ENCODE measurements at regions of chr5 and their contacts with region 1.

Region 1: DNA sequence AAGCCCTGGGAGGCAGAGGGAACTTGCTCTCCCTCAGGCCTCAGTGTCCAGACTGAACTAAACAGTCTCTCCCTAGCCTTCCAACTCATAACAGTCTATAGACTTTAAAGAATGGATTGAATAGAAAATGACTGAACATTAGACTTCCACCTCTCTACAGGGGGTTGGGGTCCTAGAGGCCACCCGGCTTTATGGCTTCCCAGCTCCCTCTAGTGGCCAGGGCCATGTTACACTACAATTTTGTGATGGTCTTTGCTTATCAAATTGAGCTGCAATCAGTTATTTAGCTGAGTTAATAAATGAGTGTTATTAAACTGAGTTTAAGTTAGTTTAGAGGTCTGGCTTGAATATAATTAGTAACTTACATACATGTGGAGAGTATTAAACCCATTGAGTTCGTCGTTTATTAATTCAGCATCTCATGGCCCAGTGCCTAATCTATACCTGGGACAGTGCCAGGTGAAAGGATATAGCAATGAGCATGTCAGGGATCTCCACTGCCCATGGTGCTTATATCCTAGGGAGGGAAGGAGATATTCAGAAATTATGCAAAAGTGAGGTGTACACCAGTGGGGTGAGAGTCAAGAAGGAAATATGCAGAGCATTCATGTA is 105.2 kb downstream of the SH3TC2 start:
- DNase-seq: peak; percentile 71
- H3K4me3 Mint-ChIP-seq: no peak overlapping the region
- H3K27ac Mint-ChIP-seq: no peak overlapping the region
- H3K4me1 Mint-ChIP-seq: peaks cover 24% of the 10 kb centered on the region
- H3K27me3 Mint-ChIP-seq: no peaks in the 10 kb centered on the region
- CTCF ChIP-seq: peak; percentile 99

Region 2: GRCh38 chr5:148858106-148858505 is 99.6 kb before region 1 on chr5:
- CTCF ChIA-PET with region 1: interaction called, 10 read pairs
- POLR2A ChIA-PET with region 1: no interaction called
- intact Hi-C with region 1: no loop called
- DNase-seq: no peak
- H3K4me3 Mint-ChIP-seq: no peak overlapping the region
- H3K27ac Mint-ChIP-seq: no peak overlapping the region
- H3K4me1 Mint-ChIP-seq: peaks cover 14% of the 10 kb centered on the region
- H3K27me3 Mint-ChIP-seq: no peaks in the 10 kb centered on the region
- CTCF ChIP-seq: no peak

Region 3: GRCh38 chr5:148928141-148928540 is 29.6 kb before region 1 on chr5:
- CTCF ChIA-PET with region 1: interaction called, 23 read pairs
- POLR2A ChIA-PET with region 1: no interaction called
- intact Hi-C with region 1: no loop called
- DNase-seq: no peak
- H3K4me3 Mint-ChIP-seq: no peak overlapping the region
- H3K27ac Mint-ChIP-seq: no peak overlapping the region
- H3K4me1 Mint-ChIP-seq: peaks cover 11% of the 10 kb centered on the region
- H3K27me3 Mint-ChIP-seq: no peaks in the 10 kb centered on the region
- CTCF ChIP-seq: no peak

Region 4: DNA sequence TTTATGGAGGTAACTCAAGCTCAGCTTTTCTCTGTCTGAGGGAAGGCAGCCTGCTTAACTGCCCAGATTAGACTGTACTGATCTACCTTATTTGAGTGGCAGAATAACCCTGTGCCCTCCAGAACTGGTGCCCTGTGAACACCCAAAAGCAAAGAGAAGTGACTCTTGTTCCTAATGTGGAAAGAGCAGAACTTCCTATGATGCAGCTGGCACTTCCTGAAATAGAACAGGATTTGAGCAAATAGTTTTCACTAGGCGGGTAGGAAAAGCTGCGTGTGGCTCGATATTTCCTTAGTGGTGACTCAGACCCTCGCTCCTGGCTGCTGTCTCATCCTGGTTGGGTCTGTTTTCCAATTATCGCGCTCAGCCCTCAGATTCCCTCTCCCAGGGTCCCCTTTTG is 15.3 kb after region 1 on chr5:
- CTCF ChIA-PET with region 1: interaction called, 1,118 read pairs
- POLR2A ChIA-PET with region 1: interaction called, 1,127 read pairs
- intact Hi-C with region 1: no loop called
- DNase-seq: peak; percentile 94
- H3K4me3 Mint-ChIP-seq: peak overlapping the region; percentile 28
- H3K27ac Mint-ChIP-seq: peak overlapping the region; percentile 93
- H3K4me1 Mint-ChIP-seq: peaks cover 88% of the 10 kb centered on the region
- H3K27me3 Mint-ChIP-seq: no peaks in the 10 kb centered on the region
- CTCF ChIP-seq: no peak

Measured in MCF 10A (cell line).